Right ventricle myocardium inferior (tissue), 1 donor: ENCODE measurements at regions of chr2 and their contacts with region 1.

Region 1: DNA sequence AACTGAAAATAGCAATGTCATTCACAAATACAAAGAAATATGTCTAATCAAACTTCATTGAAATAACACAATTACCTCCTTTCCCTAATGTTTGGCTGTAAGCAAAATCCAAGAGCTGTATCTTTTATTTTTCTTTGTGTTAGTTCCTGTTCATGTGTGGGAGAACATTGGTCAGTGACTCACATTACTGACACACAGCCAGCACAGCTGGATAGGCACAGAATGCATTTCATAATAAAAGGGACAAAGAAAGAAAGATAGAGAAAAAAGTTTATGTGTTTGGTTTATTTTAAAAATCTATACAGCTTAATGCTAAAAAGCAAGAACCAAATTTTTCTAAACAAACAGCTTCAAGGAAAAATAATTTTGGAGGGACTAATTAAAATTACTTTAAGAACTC is 185.6 kb upstream of the COL3A1 start:
- DNase-seq: peak; percentile 64
- ATAC-seq: peak; percentile 72

Region 2: GRCh38 chr2:188848887-188849435 is 60.3 kb after region 1 on chr2:
- intact Hi-C with region 1: loop called (anchors 2 kb)
- DNase-seq: no peak
- ATAC-seq: no peak

Region 3: DNA sequence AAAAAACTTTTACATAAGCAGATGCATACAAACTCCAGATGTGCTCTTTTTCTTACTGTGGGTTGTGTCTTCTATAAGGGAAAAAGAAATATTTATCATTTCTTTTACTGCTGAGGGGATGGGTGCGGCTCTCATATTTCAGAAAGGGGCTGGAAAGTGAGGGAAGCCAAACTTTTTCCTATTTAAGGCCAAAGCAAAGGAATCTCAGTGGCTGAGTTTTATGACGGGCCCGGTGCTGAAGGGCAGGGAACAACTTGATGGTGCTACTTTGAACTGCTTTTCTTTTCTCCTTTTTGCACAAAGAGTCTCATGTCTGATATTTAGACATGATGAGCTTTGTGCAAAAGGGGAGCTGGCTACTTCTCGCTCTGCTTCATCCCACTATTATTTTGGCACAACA is 185.5 kb after region 1 on chr2 and contains the start of gene COL3A1:
- intact Hi-C with region 1: loop called (anchors 5 kb)
- DNase-seq: peak; percentile 75
- ATAC-seq: peak; percentile 26
- total RNA-seq, gene COL3A1: 72.7 TPM